ENCODE measurements at regions of chr18 and their contacts with region 1.

Region 1: GRCh38 chr18:5237723-5238370 is 40.8 kb upstream of the AKAIN1 start:
- DNase-seq: peak; percentile 88
- H3K4me3 Mint-ChIP-seq: peak overlapping the region; percentile 80
- H3K27ac Mint-ChIP-seq: peak overlapping the region; percentile 94
- H3K4me1 Mint-ChIP-seq: peaks cover 43% of the 10 kb centered on the region
- H3K27me3 Mint-ChIP-seq: no peaks in the 10 kb centered on the region

Region 2: GRCh38 chr18:3261371-3262246 is 1976.2 kb before region 1 on chr18 and contains the start of gene MYL12B:
- CTCF ChIA-PET with region 1: no interaction called
- intact Hi-C with region 1: loop called (anchors 5 kb)
- DNase-seq: peak; percentile 79
- H3K4me3 Mint-ChIP-seq: peak within 1 kb of the TSS; percentile 92
- H3K27ac Mint-ChIP-seq: peak within 1 kb of the TSS; percentile 97
- H3K4me1 Mint-ChIP-seq: peaks cover 64% of the 10 kb centered on the region
- H3K27me3 Mint-ChIP-seq: no peaks in the 10 kb centered on the region
- total RNA-seq, gene MYL12B: 288 to 293 TPM

Region 3: GRCh38 chr18:5066380-5066977 is 171.4 kb before region 1 on chr18:
- CTCF ChIA-PET with region 1: no interaction called
- intact Hi-C with region 1: no loop called
- DNase-seq: peak; percentile 39
- H3K4me3 Mint-ChIP-seq: no peak overlapping the region
- H3K27ac Mint-ChIP-seq: no peak overlapping the region
- H3K4me1 Mint-ChIP-seq: no peaks in the 10 kb centered on the region
- H3K27me3 Mint-ChIP-seq: no peaks in the 10 kb centered on the region

Region 4: DNA sequence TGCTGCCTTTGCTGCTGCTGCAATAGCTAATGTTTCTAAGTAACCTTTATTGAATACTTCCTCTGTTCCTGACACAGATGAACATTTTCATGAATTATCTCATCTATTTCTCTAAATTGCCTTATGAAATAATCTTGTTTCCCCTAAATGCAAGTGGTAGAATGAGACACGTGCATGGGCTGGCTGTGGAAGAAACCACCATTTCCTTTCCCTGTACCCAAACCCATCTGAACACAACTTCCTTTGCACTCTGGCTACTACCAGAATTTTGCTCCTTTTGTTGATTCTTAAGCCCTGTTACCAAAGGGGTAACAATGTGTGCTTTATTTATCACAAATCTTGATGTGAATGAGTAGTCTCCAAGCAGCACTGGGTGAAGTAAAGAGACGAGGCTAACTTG is 70.0 kb before region 1 on chr18:
- CTCF ChIA-PET with region 1: no interaction called
- intact Hi-C with region 1: loop called (anchors 2 kb)
- DNase-seq: peak; percentile 42
- H3K4me3 Mint-ChIP-seq: no peak overlapping the region
- H3K27ac Mint-ChIP-seq: peak overlapping the region; percentile 64
- H3K4me1 Mint-ChIP-seq: peaks cover 31% of the 10 kb centered on the region
- H3K27me3 Mint-ChIP-seq: no peaks in the 10 kb centered on the region

Region 5: DNA sequence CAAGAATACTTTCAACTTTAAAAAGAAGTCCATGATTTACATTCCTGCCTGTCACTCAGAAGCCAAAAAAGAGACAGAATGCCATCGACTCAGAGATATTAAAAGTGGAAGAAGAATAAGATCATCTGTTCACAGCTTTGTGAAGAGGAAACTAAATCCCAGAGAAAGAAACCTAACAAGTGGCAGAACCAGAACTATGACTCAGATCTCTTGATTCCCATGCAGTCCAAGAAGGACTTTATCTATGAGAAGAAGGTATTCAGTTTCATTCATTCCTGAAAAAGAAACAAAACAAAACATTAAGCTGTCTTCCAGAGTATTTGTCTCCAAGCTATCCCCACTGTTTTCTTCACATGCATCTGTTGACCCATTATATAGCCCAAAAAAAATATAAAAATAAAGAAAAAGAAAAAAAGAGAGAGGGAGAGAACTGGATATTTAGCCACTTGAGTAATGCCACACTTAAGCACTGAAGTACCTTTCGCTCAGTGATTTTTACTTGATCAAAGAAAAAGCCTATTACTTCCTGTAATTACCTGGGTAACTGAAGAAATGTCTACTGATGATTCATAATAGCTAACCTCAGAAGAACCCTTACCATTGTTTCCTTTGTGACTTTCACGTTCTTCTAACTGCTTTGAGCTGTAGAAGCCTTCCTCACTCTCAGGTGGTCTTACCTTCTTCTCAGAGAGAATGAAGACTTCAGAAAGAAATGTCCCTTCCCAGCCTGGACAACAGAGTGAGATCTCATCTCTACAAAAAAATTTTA is 23.1 kb before region 1 on chr18:
- CTCF ChIA-PET with region 1: interaction called, 5 read pairs
- intact Hi-C with region 1: loop called (anchors 1 kb)
- DNase-seq: no peak
- H3K4me3 Mint-ChIP-seq: no peak overlapping the region
- H3K27ac Mint-ChIP-seq: peak overlapping the region; percentile 10
- H3K4me1 Mint-ChIP-seq: peaks cover 20% of the 10 kb centered on the region
- H3K27me3 Mint-ChIP-seq: no peaks in the 10 kb centered on the region

Region 6: DNA sequence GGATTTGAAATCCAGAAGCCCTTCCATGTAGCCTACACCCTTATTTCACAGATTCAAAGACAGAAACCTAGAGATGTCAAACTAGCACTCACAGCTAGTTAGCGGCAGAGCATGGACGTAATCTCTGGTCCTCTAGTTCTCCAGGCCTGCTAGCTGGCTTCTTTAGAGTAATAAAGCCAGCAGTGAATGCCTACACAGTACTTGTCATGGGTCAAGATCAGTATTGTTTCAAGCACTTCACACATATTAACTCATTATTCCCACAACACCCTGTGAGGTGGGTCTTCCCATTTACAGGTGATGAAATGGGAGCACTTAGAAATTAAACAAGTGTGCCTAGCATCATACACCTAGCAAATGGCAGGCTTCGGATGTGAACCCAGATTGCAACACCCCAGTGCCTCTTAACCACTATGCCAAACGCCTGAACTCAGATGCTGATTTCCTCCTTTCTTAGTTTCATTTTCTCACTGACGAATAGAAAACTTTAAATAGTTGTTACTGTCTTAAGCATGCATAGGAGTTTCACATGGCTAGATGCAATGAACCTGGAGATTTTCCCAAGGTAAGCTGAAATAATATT is 72.1 kb after region 1 on chr18:
- CTCF ChIA-PET with region 1: no interaction called
- intact Hi-C with region 1: loop called (anchors 1 kb)
- DNase-seq: peak; percentile 64
- H3K4me3 Mint-ChIP-seq: peak overlapping the region; percentile 73
- H3K27ac Mint-ChIP-seq: peak overlapping the region; percentile 56
- H3K4me1 Mint-ChIP-seq: peaks cover 22% of the 10 kb centered on the region
- H3K27me3 Mint-ChIP-seq: no peaks in the 10 kb centered on the region

Measured in activated naive CD4-positive, alpha-beta T cell treated with anti-CD3 and anti-CD28 coated beads for 36 hours (primary cell).